ENCODE measurements at regions of chr6 and their contacts with region 1.

Region 1: GRCh38 chr6:106014930-106015329 is 71.2 kb upstream of the PRDM1 start:
- DNase-seq: no peak
- H3K4me3 ChIP-seq: no peak overlapping the region
- H3K27ac ChIP-seq: no peak overlapping the region
- H3K4me1 ChIP-seq: no peaks in the 10 kb centered on the region
- H3K27me3 ChIP-seq: peaks cover 11% of the 10 kb centered on the region
- CTCF ChIP-seq: no peak

Region 2: GRCh38 chr6:105769987-105770386 is 244.9 kb before region 1 on chr6:
- CTCF ChIA-PET with region 1: no interaction called
- POLR2A ChIA-PET with region 1: no interaction called
- intact Hi-C with region 1: no loop called
- DNase-seq: no peak
- H3K4me3 ChIP-seq: no peak overlapping the region
- H3K27ac ChIP-seq: no peak overlapping the region
- H3K4me1 ChIP-seq: no peaks in the 10 kb centered on the region
- H3K27me3 ChIP-seq: no peaks in the 10 kb centered on the region
- CTCF ChIP-seq: no peak

Region 3: GRCh38 chr6:105992315-105992961 is 22.5 kb before region 1 on chr6:
- CTCF ChIA-PET with region 1: no interaction called
- POLR2A ChIA-PET with region 1: interaction called, 19 read pairs
- intact Hi-C with region 1: no loop called
- DNase-seq: peak; percentile 87
- H3K4me3 ChIP-seq: peak overlapping the region; percentile 80
- H3K27ac ChIP-seq: no peak overlapping the region
- H3K4me1 ChIP-seq: peaks cover 6% of the 10 kb centered on the region
- H3K27me3 ChIP-seq: peaks cover 46% of the 10 kb centered on the region
- CTCF ChIP-seq: no peak